ENCODE measurements at regions of chr7 and their contacts with region 1.

Region 1: DNA sequence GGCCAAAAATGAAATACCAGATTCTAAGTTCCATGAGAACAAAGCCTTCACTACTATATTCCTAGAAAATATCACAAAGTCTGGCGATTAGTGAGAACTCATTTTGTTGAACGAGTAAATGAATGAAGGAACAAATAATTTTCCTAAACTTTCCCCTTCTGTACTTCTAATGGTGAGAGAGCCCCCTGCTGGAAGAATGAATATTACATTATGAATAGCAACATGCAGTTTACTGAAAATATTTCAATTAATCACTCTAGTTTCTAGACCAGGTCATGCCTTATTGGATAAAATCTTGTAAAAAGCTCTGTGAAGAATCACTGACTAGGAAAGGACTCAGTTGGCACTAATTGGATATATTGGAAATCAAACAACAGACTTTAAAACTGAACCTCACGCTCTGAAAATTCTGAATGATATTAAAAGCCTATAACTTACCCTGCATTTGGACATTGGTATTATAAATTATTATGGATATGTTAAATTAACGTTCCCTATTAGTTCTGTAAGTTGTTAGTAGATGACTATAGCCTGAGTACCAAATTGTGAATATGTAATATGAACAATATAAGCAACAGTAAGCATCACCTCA is 32.4 kb upstream of the MTPN start:
- DNase-seq: no peak
- H3K4me3 ChIP-seq: no peak overlapping the region
- H3K27ac ChIP-seq: no peak overlapping the region
- H3K4me1 ChIP-seq: no peaks in the 10 kb centered on the region
- H3K27me3 ChIP-seq: no peaks in the 10 kb centered on the region
- CTCF ChIP-seq: peak; percentile 58 to 84 (median 70)

Region 2: GRCh38 chr7:135801045-135801693 is 208.4 kb before region 1 on chr7:
- intact Hi-C with region 1: loop called (anchors 1 kb)
- DNase-seq: no peak
- H3K4me3 ChIP-seq: peak overlapping the region; percentile 32 to 58
- H3K27ac ChIP-seq: peak overlapping the region; percentile 36 to 54
- H3K4me1 ChIP-seq: peaks cover 3 to 20% of the 10 kb centered on the region in 2 donors
- H3K27me3 ChIP-seq: no peaks in the 10 kb centered on the region
- CTCF ChIP-seq: peak; percentile 47 to 85 (median 80)

Measured in ascending aorta (tissue), 2 donors.